ENCODE measurements at regions of chr10 and their contacts with region 1.

Region 1: GRCh38 chr10:101818119-101818871 is at the start of gene OGA:
- DNase-seq: peak; percentile 99
- ATAC-seq: peak; percentile 89
- H3K4me3 Mint-ChIP-seq: peak within 1 kb of the TSS; percentile 89
- H3K27ac Mint-ChIP-seq: peak within 1 kb of the TSS; percentile 83
- H3K4me1 Mint-ChIP-seq: peaks cover 40% of the 10 kb centered on the region
- H3K27me3 Mint-ChIP-seq: no peaks in the 10 kb centered on the region
- total RNA-seq, gene OGA: 113 to 124 TPM

Region 2: DNA sequence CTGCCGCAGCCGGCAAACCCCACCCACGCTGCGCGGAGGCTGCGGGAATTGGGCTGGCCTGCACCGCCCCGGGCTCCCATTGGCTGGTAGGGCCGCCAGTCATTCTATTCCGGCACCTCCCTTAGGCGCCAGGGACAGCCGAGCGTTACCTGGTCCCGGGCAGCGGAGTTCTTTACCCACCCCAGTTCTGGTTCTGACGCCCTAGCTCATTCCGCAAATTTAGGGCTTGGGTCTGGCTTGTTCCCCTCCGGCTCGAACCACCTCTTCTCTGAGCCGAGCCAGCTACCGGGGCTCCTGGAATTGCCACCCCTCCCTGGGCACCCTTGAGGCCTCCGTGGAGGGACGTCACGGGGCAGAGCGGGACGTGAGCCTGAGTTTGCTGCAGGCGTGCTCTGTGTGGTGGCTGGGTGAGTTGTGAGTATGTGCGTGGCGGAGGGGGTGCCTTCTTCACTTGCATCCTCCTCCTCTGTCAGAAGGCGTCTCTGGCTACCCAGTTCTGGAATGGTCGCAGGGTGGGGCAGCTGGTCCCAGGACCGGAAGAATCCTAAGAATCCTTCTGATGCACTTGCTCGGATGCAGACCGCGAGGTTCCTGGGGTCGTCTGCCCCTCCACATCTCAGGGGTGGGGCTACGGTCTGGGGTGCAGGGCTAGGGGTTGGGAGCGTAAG is 787.0 kb before region 1 on chr10 and contains the starts of genes PDZD7 and SFXN3:
- CTCF ChIA-PET with region 1: no interaction called
- POLR2A ChIA-PET with region 1: no interaction called
- intact Hi-C with region 1: loop called in 1 of 2 experiments (anchors 5 kb)
- DNase-seq: peak; percentile 98
- ATAC-seq: peak; percentile 85
- H3K4me3 Mint-ChIP-seq: peak within 1 kb of the TSS; percentile 80
- H3K27ac Mint-ChIP-seq: peak within 1 kb of the TSS; percentile 82
- H3K4me1 Mint-ChIP-seq: peaks cover 22% of the 10 kb centered on the region
- H3K27me3 Mint-ChIP-seq: no peaks in the 10 kb centered on the region
- total RNA-seq, gene PDZD7: 0.28 to 0.32 TPM
- total RNA-seq, gene SFXN3: 30.0 to 37.7 TPM

Region 3: GRCh38 chr10:101080933-101081931 is 737.1 kb before region 1 on chr10:
- CTCF ChIA-PET with region 1: no interaction called
- POLR2A ChIA-PET with region 1: no interaction called
- intact Hi-C with region 1: no loop called
- DNase-seq: no peak
- ATAC-seq: no peak
- H3K4me3 Mint-ChIP-seq: no peak overlapping the region
- H3K27ac Mint-ChIP-seq: no peak overlapping the region
- H3K4me1 Mint-ChIP-seq: no peaks in the 10 kb centered on the region
- H3K27me3 Mint-ChIP-seq: peaks cover 35% of the 10 kb centered on the region

Region 4: DNA sequence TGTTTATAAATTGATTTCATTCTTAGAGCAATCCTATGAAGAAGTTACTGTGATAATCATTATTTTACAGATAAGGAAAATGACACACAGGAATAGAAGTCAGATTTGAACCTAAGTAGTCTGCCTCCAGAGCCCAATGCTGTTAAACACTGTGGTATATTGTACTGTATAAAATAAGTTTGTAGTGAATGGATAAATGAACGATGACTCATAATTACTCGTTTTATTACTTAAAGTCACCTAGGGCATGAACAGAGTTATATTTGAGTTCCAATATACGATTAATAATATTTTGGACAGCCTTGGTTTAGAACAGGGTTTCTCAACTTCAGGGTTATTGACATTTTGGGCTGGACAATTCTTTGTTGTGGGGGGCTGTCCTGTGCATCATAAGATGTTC is 472.1 kb before region 1 on chr10:
- CTCF ChIA-PET with region 1: no interaction called
- POLR2A ChIA-PET with region 1: no interaction called
- intact Hi-C with region 1: no loop called
- DNase-seq: no peak
- ATAC-seq: no peak
- H3K4me3 Mint-ChIP-seq: no peak overlapping the region
- H3K27ac Mint-ChIP-seq: no peak overlapping the region
- H3K4me1 Mint-ChIP-seq: no peaks in the 10 kb centered on the region
- H3K27me3 Mint-ChIP-seq: peaks cover 10% of the 10 kb centered on the region

Region 5: GRCh38 chr10:101693978-101694673 is 124.2 kb before region 1 on chr10:
- CTCF ChIA-PET with region 1: interaction called, 3 read pairs
- POLR2A ChIA-PET with region 1: interaction called, 4 read pairs
- intact Hi-C with region 1: loop called in 1 of 2 experiments (anchors 1 kb)
- DNase-seq: peak; percentile 80
- ATAC-seq: peak; percentile 76
- H3K4me3 Mint-ChIP-seq: peak overlapping the region; percentile 88
- H3K27ac Mint-ChIP-seq: peak overlapping the region; percentile 97
- H3K4me1 Mint-ChIP-seq: peaks cover 43% of the 10 kb centered on the region
- H3K27me3 Mint-ChIP-seq: no peaks in the 10 kb centered on the region

Region 6: GRCh38 chr10:102055647-102056419 is 237.5 kb after region 1 on chr10 and contains the start of gene ARMH3:
- CTCF ChIA-PET with region 1: interaction called, 5 read pairs
- POLR2A ChIA-PET with region 1: interaction called, 4 read pairs
- intact Hi-C with region 1: loop called in 1 of 2 experiments (anchors 1 kb)
- DNase-seq: peak; percentile 96
- ATAC-seq: peak; percentile 98
- H3K4me3 Mint-ChIP-seq: peak within 1 kb of the TSS; percentile 95
- H3K27ac Mint-ChIP-seq: peak within 1 kb of the TSS; percentile 93
- H3K4me1 Mint-ChIP-seq: peaks cover 40% of the 10 kb centered on the region
- H3K27me3 Mint-ChIP-seq: no peaks in the 10 kb centered on the region
- total RNA-seq, gene ARMH3: 16.0 to 21.0 TPM

Region 7: DNA sequence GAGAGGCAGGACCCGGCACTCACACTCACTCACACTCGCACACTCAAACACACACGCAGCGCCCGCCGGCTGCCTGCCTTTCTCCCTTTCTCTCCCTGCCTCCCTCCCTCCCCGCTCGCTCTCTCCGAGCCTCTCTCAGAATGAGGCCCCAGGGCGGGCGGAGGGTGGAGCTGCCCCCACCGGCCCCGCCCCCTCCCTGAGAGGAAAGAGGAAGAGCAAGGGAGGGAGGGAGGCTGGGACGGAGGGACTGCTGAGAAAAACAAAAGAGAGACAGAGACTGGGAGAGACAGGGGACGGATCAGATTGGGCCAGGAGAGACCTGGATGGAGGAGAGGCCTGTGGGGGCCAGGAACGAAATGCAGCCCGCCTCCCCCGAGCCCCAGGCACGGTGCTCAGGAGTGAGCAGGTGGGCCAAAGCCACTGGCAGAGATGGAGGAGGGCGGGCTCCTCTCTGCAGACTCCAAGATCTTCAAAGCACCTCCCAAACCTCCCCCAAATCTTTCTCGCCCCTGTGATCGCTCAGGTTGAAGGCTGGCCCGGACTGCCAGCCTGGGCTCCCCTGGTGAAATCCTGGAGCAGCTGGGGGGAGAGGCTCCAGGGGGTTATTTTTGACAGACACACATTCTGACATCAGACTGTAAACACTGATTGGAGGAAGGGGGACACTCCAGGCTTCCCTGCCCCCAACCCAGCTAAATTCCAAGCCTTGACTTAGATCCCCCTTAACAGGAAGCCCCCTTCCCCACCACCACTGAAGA is 296.7 kb after region 1 on chr10:
- CTCF ChIA-PET with region 1: no interaction called
- POLR2A ChIA-PET with region 1: interaction called, 8 read pairs
- intact Hi-C with region 1: loop called (anchors 1 to 5 kb)
- DNase-seq: peak; percentile 95
- ATAC-seq: peak; percentile 60
- H3K4me3 Mint-ChIP-seq: peak overlapping the region; percentile 81
- H3K27ac Mint-ChIP-seq: peak overlapping the region; percentile 97
- H3K4me1 Mint-ChIP-seq: peaks cover 55% of the 10 kb centered on the region
- H3K27me3 Mint-ChIP-seq: no peaks in the 10 kb centered on the region